Cardiac septum (tissue), 1 donor: ENCODE measurements at regions of chr12 and their contacts with region 1.

Region 1: GRCh38 chr12:67705394-67706370 is 57.1 kb downstream of the DYRK2 start:
- DNase-seq: no peak

Region 2: DNA sequence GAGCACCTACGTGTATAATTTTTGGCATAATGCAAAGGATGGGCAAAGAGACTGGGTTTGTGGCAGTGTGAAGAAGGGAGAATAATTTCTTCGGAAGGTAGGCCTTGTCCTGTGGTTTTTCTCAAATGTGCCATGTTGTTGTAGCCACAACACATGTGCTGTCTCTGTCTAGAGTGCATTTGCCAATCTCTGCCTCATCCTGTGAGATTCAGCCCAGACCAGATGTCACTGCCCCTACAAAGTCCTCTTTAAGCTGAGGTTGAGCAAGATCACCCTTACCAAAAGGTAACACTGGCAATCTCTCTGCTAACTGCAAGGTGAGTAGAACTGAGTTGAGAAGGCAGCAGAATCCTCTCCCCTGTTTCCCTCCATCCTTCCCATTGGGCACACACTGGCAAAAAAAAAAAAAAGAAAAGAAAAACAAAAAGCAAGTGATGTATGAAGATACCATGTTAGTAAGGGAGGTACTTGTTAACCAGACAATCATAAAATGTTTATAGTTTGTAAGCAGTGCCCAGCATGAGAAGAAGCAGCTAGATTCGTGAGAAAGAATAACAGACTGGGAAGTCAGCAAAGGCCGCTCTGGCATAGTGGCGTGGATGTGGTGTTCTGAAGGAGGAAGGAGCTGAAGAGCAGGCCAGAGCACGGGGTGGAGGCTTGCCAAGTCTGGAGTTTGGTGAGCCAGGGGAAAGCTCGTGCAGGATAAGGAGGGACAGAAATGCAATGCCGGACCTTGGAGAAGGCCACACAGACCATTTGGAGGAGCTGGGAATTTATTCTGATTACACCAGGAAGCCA is 38.2 kb before region 1 on chr12:
- intact Hi-C with region 1: loop called (anchors 5 kb)
- DNase-seq: peak; percentile 89

Region 3: GRCh38 chr12:67853204-67853603 is 147.5 kb after region 1 on chr12:
- intact Hi-C with region 1: no loop called
- DNase-seq: no peak